ENCODE measurements at regions of chr5 and their contacts with region 1.

Region 1: DNA sequence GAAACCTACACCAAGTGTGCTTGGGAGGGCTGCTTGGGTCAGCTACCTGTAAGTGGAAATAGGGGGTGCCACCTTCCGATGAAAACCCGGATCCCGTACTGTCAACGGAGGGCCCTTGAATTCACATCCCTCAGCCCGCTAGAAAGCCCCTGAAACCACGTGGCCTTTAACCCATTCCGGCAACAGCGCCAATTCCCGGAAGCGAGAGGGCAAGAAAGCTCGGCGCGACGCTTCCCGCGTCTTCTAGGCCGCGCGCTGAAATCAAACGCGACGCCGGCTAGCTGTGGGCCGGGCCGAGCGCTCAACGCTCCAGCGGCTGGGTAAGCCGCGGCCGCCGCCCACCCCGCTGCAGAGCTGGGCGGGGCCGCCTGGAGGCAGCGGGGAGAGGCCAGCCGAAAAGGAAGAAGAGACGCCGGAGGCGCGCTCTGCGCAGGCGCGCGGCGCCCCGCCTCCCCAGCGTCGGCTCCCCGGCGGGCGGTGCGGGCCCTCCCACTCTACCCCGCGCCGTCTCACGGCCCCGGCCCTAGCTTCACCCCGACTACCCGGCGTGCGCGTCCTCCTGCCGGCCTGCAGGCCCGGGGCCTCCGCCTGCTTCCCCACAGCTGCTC is at the start of gene KIF2A:
- DNase-seq: peak; percentile 93
- H3K4me3 ChIP-seq: peak within 1 kb of the TSS; percentile 96 to 100 (median 98)
- H3K27ac ChIP-seq: peak within 1 kb of the TSS; percentile 67
- H3K4me1 ChIP-seq: peaks cover 19% of the 10 kb centered on the region
- H3K27me3 ChIP-seq: no peaks in the 10 kb centered on the region
- CTCF ChIP-seq: peak in 1 of 2 donors; percentile 11
- POLR2A ChIP-seq: peak; percentile 27
- total RNA-seq, gene KIF2A: 57.7 and 65.1 TPM in 2 replicates

Region 2: GRCh38 chr5:62231576-62231975 is 74.2 kb before region 1 on chr5:
- CTCF ChIA-PET with region 1: no interaction called
- POLR2A ChIA-PET with region 1: no interaction called
- dilution Hi-C with region 1: no loop called
- intact Hi-C with region 1: loop called (anchors 1 kb)
- DNase-seq: no peak
- H3K4me3 ChIP-seq: no peak overlapping the region
- H3K27ac ChIP-seq: no peak overlapping the region
- H3K4me1 ChIP-seq: no peaks in the 10 kb centered on the region
- H3K27me3 ChIP-seq: no peaks in the 10 kb centered on the region
- CTCF ChIP-seq: no peak
- POLR2A ChIP-seq: no peak

Region 3: DNA sequence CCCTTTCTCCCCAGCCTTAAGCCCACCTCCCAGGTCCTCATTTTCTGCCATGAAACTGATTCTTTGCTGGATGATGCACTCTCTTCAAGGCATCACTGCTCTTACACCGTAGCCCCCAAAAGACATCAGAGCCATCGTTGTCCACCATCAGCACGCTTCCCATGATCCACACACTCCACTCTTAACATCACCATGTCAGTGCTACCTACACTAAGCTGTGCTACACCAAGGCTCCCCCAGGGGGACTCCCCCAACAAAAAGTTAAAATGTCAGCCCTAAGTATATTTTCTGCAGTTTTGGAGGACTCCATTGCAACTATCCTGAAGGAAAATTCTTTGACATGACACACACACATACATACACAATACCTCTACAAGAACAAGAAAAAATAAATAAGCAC is 33.9 kb before region 1 on chr5:
- CTCF ChIA-PET with region 1: no interaction called
- POLR2A ChIA-PET with region 1: no interaction called
- dilution Hi-C with region 1: no loop called
- intact Hi-C with region 1: loop called (anchors 1 kb)
- DNase-seq: no peak
- H3K4me3 ChIP-seq: no peak overlapping the region
- H3K27ac ChIP-seq: no peak overlapping the region
- H3K4me1 ChIP-seq: peaks cover 7% of the 10 kb centered on the region
- H3K27me3 ChIP-seq: no peaks in the 10 kb centered on the region
- CTCF ChIP-seq: no peak
- POLR2A ChIP-seq: no peak

Region 4: GRCh38 chr5:62354028-62354874 is 48.4 kb after region 1 on chr5:
- CTCF ChIA-PET with region 1: interaction called, 5 read pairs
- POLR2A ChIA-PET with region 1: no interaction called
- dilution Hi-C with region 1: no loop called
- intact Hi-C with region 1: loop called (anchors 2 kb)
- DNase-seq: peak; percentile 76
- H3K4me3 ChIP-seq: no peak overlapping the region
- H3K27ac ChIP-seq: no peak overlapping the region
- H3K4me1 ChIP-seq: no peaks in the 10 kb centered on the region
- H3K27me3 ChIP-seq: no peaks in the 10 kb centered on the region
- CTCF ChIP-seq: peak; percentile 19 to 24
- POLR2A ChIP-seq: no peak

Region 5: GRCh38 chr5:62578540-62578939 is 272.7 kb after region 1 on chr5 and contains the start of gene LRRC70:
- CTCF ChIA-PET with region 1: no interaction called
- POLR2A ChIA-PET with region 1: no interaction called
- dilution Hi-C with region 1: no loop called
- intact Hi-C with region 1: loop called (anchors 5 kb)
- DNase-seq: peak; percentile 93
- H3K4me3 ChIP-seq: peak within 1 kb of the TSS; percentile 51 to 99 (median 95)
- H3K27ac ChIP-seq: peak within 1 kb of the TSS; percentile 88
- H3K4me1 ChIP-seq: peaks cover 73% of the 10 kb centered on the region
- H3K27me3 ChIP-seq: no peaks in the 10 kb centered on the region
- CTCF ChIP-seq: no peak
- POLR2A ChIP-seq: no peak
- total RNA-seq, gene LRRC70: 24.5 and 26.5 TPM in 2 replicates

Measured in endothelial cell of umbilical vein (primary cell).